BJ (cell line): ENCODE measurements at regions of chr12 and their contacts with region 1.

Region 1: DNA sequence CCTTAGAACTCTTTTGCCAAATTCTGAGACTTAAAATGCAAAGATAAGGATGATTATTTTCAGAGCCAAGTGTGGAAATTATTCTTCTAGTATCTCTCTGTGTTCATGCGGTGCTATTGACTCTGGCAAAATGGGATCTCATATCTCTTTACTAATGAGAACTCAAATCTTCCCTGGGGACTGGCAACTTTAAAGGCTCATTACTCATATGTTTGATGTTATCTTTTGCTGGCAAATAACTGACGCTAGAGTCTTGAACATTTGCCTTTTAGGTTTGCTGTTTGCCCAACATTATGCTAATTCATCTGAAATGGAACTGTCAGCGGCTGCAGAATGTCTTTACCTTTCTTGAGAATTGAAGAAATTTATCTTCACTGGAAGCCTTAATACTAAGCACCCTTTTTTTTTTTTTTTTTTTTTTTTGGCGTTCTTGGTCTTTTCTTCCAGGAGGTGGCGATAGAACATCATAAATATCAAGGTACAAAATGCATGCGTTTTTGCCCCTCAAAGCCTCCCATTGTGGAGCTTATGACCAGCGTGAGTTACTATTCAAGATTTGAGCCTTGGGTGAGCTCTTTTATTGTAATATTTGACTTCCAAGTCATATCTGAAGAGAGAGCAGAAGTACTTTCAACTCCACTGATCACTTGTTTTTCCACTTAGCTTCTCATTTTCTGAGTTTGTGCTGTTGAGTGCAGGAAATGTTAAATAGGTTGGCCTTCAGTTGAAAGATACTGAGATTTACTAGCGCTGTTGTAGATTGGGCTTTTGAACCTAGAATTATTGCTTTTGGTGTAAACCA is 86.6 kb downstream of the CAND1 start:
- DNase-seq: no peak
- H3K4me3 ChIP-seq: no peak overlapping the region
- H3K27me3 ChIP-seq: no peaks in the 10 kb centered on the region
- CTCF ChIP-seq: peak; percentile 53

Region 2: DNA sequence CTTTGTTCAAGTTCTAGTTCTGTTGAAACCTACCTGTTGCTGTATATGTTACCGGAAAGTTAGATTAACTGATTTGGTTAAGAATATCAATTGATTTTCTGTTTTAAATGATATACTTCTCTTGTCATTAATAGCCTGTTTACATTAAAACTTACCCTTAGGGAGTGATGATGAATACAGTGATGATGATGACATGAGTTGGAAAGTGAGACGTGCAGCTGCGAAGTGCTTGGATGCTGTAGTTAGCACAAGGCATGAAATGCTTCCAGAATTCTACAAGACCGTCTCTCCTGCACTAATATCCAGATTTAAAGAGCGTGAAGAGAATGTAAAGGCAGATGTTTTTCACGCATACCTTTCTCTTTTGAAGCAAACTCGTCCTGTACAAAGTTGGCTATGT is 53.6 kb before region 1 on chr12:
- CTCF ChIA-PET with region 1: no interaction called
- POLR2A ChIA-PET with region 1: interaction called, 30 read pairs
- DNase-seq: no peak
- H3K4me3 ChIP-seq: no peak overlapping the region
- H3K27me3 ChIP-seq: no peaks in the 10 kb centered on the region
- CTCF ChIP-seq: no peak

Region 3: DNA sequence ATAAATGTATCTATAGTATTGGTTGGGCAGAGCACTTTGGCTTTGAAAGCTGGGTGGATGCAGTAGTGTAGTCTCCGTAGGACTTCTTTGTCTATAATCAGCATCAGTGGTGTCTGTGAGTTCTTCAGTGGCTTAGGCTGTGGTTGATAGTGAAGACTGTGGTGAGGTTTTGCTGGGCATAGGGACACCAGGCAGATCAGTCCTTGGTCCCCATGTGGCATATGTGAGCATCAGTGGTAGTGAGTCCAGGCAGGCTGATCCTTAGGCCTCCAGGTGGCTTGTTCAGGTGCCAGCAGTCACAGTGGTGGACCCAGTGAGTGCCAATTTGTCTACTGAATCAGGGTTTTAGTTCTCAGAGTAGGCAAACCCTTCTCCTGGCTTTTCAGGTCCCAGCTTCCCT is 16.2 kb before region 1 on chr12:
- CTCF ChIA-PET with region 1: no interaction called
- POLR2A ChIA-PET with region 1: no interaction called
- DNase-seq: no peak
- H3K4me3 ChIP-seq: no peak overlapping the region
- H3K27me3 ChIP-seq: no peaks in the 10 kb centered on the region
- CTCF ChIP-seq: no peak

Region 4: DNA sequence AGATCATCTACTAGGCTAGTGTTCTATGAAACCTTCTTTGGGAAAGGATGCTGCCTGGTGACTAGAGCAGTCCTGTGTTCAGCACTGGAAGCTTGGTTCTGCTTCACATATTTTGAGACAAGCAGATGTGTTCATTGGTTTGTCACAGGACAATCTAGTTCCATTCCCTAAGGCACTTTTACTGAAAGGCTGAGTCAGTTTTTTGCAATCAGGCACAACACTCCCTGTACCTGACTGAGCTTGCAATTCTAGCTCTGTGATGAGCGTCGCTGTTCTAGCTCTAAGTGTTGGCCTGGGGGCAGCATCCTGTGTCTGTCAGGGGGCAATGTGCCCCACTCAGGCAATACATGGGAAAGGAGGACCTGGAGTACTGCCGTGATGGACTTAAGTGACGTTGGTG is 57.8 kb after region 1 on chr12:
- CTCF ChIA-PET with region 1: interaction called, 26 read pairs
- POLR2A ChIA-PET with region 1: no interaction called
- DNase-seq: no peak
- H3K4me3 ChIP-seq: no peak overlapping the region
- H3K27me3 ChIP-seq: no peaks in the 10 kb centered on the region
- CTCF ChIP-seq: no peak

Region 5: GRCh38 chr12:67509666-67510384 is 154.0 kb after region 1 on chr12:
- CTCF ChIA-PET with region 1: no interaction called
- POLR2A ChIA-PET with region 1: no interaction called
- DNase-seq: no peak
- H3K4me3 ChIP-seq: no peak overlapping the region
- H3K27me3 ChIP-seq: no peaks in the 10 kb centered on the region; the same call in 1 of the 2 replicates
- CTCF ChIP-seq: no peak

Region 6: DNA sequence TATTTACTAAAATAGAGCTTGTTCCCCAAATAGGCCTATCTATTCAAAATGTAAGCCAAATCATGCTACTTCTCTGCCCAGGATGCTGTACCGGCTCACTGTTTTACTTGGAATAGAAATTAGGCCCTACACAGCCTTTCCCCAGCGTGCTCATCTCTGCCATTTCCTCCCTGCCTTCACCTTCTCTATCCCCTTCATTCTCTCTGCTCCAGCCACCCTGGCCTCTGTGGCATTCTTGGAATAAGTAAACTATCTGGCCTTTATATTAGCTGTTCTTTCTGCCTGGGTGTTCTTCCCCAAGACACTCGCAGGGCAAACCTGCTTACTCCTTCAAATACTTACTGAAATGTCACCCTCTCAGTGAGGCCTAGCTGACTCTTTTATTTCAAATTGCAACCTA is 261.8 kb after region 1 on chr12:
- CTCF ChIA-PET with region 1: no interaction called
- POLR2A ChIA-PET with region 1: interaction called, 17 read pairs
- DNase-seq: no peak
- H3K4me3 ChIP-seq: no peak overlapping the region
- H3K27me3 ChIP-seq: no peaks in the 10 kb centered on the region; the same call in 1 of the 2 replicates
- CTCF ChIP-seq: no peak

Region 7: GRCh38 chr12:67910360-67911274 is 554.8 kb after region 1 on chr12:
- CTCF ChIA-PET with region 1: interaction called, 3 read pairs
- POLR2A ChIA-PET with region 1: interaction called, 13 read pairs
- DNase-seq: peak; percentile 99
- H3K4me3 ChIP-seq: no peak overlapping the region
- H3K27me3 ChIP-seq: no peaks in the 10 kb centered on the region
- CTCF ChIP-seq: no peak

Region 8: GRCh38 chr12:67943226-67943892 is 587.6 kb after region 1 on chr12:
- CTCF ChIA-PET with region 1: interaction called, 21 read pairs
- POLR2A ChIA-PET with region 1: no interaction called
- DNase-seq: peak; percentile 41
- H3K4me3 ChIP-seq: no peak overlapping the region
- H3K27me3 ChIP-seq: no peaks in the 10 kb centered on the region
- CTCF ChIP-seq: peak; percentile 69

Region 9: GRCh38 chr12:68148258-68148951 is 792.6 kb after region 1 on chr12:
- CTCF ChIA-PET with region 1: no interaction called
- POLR2A ChIA-PET with region 1: interaction called, 13 read pairs
- DNase-seq: no peak
- H3K4me3 ChIP-seq: no peak overlapping the region
- H3K27me3 ChIP-seq: peaks cover 5% of the 10 kb centered on the region
- CTCF ChIP-seq: no peak